ENCODE measurements at regions of chr1 and their contacts with region 1.

Region 1: DNA sequence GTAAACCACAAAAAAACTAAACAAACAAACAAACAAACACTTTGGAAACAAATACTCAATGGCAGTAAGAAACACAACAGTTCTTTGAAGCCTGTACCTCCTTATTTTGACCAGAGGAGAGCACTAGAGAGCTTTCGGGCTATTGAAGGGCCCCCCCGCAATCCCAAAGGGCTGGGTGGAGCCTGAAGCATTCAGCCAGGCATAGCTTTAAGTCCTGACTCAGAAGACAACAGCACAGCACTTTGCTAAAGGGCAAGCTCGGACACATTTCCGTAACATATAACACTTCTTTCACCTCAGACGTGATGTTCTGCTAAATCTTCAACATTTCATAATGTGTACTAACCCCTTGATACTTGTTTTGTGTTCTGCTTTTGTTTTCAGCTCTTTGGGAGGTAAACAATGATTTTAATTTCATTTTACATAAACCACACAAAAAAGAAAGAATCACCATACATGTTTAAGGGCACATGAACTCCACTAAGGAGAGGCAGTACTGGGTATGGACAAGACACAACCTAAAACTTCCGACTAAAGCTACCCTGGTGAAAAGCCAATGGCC is 9.7 kb upstream of the SHCBP1L start:
- DNase-seq: peak; percentile 70 to 82
- H3K4me3 ChIP-seq: peak overlapping the region; percentile 41; the same call in 1 of the 2 replicates
- H3K27ac ChIP-seq: peak overlapping the region; percentile 59
- H3K4me1 ChIP-seq: peaks cover 13% of the 10 kb centered on the region
- H3K27me3 ChIP-seq: no peaks in the 10 kb centered on the region
- CTCF ChIP-seq: peak; percentile 95

Region 2: GRCh38 chr1:182927693-182928433 is 34.8 kb before region 1 on chr1:
- CTCF ChIA-PET with region 1: no interaction called
- POLR2A ChIA-PET with region 1: no interaction called
- intact Hi-C with region 1: no loop called
- DNase-seq: no peak
- H3K4me3 ChIP-seq: no peak overlapping the region
- H3K27ac ChIP-seq: no peak overlapping the region
- H3K4me1 ChIP-seq: no peaks in the 10 kb centered on the region
- H3K27me3 ChIP-seq: no peaks in the 10 kb centered on the region
- CTCF ChIP-seq: no peak

Region 3: DNA sequence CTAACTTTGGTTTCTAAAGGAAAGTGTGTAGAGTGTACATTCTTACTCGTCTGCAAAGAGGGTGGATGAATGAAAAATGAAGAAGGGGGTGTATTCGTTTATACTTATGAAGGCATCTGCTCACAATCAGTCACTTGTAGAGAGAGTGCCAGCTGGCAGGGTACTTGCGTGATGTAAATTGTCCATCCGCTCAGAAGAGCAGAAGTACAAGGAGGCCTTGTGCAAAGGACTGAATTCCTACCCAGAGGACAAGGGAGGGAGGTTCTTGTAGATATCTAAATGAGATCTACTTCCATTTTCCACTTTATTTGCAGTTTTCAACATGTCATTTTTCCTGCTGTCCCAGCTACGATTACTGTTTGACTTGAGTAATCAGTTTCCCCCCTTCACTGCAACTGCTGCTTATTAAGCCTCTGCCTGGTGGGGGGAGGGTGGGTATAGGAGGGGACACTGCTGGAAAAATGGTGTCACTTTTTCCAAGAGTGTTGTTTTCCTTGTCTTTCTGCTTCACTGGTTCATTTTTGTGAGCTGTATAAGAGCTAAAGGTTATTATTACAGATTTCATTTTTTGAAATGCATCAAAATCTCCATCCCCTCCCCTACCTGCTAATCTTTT is 127.9 kb after region 1 on chr1:
- CTCF ChIA-PET with region 1: interaction called, 3 read pairs
- POLR2A ChIA-PET with region 1: interaction called, 3 read pairs
- intact Hi-C with region 1: loop called (anchors 10 kb)
- DNase-seq: no peak
- H3K4me3 ChIP-seq: no peak overlapping the region
- H3K27ac ChIP-seq: no peak overlapping the region
- H3K4me1 ChIP-seq: peaks cover 58% of the 10 kb centered on the region
- H3K27me3 ChIP-seq: no peaks in the 10 kb centered on the region
- CTCF ChIP-seq: no peak

Region 4: GRCh38 chr1:183185941-183186490 is 223.4 kb after region 1 on chr1 and contains the start of gene LAMC2:
- CTCF ChIA-PET with region 1: no interaction called
- POLR2A ChIA-PET with region 1: no interaction called
- intact Hi-C with region 1: loop called (anchors 1 kb)
- DNase-seq: peak; percentile 89 to 98
- H3K4me3 ChIP-seq: peak within 1 kb of the TSS; percentile 75
- H3K27ac ChIP-seq: peak within 1 kb of the TSS; percentile 85
- H3K4me1 ChIP-seq: peaks cover 42% of the 10 kb centered on the region
- H3K27me3 ChIP-seq: no peaks in the 10 kb centered on the region
- CTCF ChIP-seq: peak; percentile 63
- total RNA-seq, gene LAMC2: 105 and 109 TPM in 2 replicates

Region 5: DNA sequence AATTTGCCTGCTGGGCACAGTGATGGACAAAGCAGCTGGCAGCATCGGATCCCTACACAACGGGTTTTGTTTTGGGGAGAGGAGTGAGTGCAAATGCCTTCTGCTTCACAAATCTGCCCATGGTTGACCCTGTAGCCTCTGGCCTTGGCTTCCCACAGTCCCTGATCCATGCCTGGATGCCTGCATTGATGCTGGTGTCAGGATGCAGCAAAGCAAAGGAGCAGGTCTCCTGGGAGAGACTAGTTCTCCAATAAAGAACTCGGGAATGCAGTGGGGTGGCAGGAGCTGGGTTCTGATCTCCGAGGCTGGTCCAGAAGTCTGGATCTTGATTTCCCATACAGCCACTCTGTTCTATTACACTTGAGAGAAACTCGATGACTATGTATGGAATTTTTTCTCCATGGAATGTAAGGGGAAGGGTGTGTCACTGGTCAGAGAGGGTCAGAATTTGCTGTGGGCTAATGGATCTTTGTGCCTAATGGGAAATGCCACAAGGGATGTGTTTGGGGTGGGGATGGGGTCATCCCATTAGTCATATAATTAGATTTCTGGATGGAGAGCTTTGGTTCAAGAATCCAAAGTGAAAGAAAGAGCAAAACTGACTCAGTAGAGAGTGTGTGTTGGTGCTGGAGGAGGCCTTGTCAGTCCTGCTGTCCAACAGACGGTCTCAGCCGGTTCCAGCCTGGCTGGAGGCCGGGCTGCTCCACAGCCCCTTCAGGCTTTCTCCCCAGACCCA is 309.6 kb after region 1 on chr1:
- CTCF ChIA-PET with region 1: no interaction called
- POLR2A ChIA-PET with region 1: no interaction called
- intact Hi-C with region 1: loop called (anchors 2 kb)
- DNase-seq: peak; percentile 61 to 85
- H3K4me3 ChIP-seq: no peak overlapping the region
- H3K27ac ChIP-seq: peak overlapping the region; percentile 92
- H3K4me1 ChIP-seq: peaks cover 46% of the 10 kb centered on the region
- H3K27me3 ChIP-seq: no peaks in the 10 kb centered on the region
- CTCF ChIP-seq: no peak

Region 6: DNA sequence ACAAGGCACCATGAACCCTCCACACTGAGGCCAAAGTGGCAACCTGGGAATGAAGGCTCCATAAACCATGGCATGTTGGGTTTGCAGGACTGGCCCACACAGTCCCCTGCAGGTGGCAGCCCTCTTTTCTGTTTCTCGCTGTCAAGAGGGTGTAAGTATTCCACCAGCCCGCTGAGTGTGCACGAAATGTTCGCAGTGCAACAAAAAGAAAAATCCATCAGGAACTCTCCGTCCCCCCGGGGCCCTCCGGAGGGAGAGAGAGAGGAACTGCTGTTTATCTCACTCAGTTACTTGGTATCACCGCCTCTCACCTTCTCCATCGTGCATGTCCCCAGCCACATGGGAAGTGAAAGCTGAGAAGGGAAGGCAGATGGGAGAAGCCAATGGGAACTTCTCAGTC is 589.3 kb after region 1 on chr1:
- CTCF ChIA-PET with region 1: interaction called, 8 read pairs
- POLR2A ChIA-PET with region 1: no interaction called
- intact Hi-C with region 1: loop called (anchors 10 kb)
- DNase-seq: no peak
- H3K4me3 ChIP-seq: no peak overlapping the region
- H3K27ac ChIP-seq: no peak overlapping the region
- H3K4me1 ChIP-seq: no peaks in the 10 kb centered on the region
- H3K27me3 ChIP-seq: no peaks in the 10 kb centered on the region
- CTCF ChIP-seq: no peak

Measured in PC-9 (cell line).